Right ventricle myocardium inferior (tissue), 1 donor: ENCODE measurements at regions of chr1 and their contacts with region 1.

Region 1: DNA sequence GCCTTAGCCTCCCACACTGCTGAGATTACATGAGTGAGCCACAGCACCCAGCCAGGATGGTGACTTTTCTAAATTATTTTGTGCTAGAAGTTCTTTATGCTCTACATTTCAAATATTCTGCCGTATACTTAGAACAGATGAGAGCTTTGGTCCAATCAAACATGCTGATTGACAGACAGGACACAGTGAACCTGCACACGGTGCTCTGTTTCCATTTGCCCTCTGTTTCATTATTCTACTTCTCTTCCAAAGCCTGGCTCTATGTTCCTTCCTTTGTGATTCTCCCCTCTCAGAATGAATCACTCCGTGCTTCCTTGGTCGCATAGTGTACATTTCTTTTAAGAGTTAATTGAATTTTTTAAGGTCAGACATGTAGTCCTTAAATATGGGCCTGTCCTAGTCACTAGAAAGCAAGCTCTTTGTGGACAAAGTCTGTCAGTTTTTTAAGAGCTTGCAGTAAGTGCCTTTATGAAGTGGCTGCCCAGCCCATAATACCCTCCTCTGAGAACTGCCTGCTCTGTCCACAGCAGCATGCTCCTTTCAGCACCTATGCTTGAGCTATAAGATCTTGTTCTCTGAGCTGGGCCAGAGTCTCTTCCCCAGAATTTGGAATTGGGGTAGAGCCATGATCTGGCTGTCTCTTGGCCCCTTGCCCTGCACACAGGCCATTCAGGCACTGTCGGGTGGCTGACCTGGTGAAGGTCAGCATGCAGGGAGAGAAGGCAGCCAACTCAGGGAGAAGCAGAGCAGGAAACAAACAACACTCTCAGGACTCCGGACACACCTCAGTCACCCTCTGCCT is 66.8 kb upstream of the SLC44A3 start:
- DNase-seq: peak; percentile 77
- ATAC-seq: peak; percentile 91

Region 2: DNA sequence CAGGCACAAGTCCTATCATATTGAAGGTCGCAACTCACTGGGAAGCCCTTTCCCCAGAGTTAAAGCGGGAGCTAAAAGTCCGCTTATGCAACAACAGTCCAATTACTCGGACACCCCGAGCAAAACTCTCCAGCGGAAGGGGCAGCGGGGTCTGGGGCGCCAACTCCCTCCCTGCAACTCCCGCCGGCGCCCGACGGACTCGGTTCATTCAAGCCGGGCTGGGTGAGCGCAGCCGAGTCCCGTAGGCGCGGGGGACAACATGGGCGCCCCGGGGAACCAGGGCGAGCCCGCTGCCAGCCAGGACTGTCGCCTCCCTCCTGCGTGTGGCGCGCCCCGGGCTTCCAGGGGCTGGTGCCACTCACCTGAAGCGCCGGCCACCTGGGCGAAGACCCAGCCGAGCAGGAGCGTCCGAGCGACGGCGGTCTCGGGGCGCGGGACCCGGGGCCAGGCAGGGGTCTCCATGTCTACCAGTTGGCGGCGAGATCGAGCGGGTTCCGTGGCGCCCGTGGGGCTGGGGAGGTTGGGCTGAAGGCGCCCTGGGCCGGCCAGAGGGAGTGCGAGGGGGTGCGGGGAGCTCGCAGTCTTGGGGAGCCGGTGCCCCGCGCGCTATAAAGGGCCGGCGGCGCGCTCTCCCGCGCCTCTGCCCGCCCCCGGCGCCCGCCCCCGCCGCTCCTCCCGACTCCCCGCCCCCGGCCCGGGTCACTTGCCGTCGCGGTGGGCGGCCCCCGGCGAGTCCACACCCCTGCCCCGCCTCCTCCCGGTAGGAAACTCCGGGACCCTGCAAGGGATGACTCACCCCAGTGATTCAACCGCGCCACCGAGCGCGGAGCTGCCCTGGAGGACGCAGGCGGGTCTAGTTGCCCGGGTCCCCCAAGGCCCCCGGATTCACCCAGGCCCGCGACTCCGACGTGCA is 211.9 kb before region 1 on chr1 and contains the start of gene F3:
- intact Hi-C with region 1: loop called (anchors 2 kb)
- DNase-seq: peak; percentile 92
- ATAC-seq: peak; percentile 93
- total RNA-seq, gene F3: 27.9 TPM

Region 3: DNA sequence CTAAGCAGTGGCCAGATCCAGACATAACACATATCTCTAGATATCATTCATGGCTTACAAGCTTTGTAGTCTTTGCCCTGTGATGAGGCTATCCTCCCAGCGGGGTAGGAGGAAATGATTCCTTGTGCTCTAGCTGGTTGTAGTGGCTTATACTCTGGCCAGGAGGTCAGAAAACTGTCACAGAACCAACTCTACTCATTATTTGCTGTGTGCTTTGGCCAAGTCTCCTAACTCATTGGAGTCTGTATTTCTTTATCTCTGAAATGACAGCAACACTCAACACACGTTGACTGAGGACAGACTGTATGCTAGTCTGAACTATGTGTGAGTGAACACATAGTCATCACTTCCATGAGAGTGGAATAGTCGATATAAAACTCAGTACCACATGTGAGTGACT is 95.2 kb before region 1 on chr1:
- intact Hi-C with region 1: loop called (anchors 1 kb)
- DNase-seq: no peak
- ATAC-seq: peak; percentile 96

Region 4: DNA sequence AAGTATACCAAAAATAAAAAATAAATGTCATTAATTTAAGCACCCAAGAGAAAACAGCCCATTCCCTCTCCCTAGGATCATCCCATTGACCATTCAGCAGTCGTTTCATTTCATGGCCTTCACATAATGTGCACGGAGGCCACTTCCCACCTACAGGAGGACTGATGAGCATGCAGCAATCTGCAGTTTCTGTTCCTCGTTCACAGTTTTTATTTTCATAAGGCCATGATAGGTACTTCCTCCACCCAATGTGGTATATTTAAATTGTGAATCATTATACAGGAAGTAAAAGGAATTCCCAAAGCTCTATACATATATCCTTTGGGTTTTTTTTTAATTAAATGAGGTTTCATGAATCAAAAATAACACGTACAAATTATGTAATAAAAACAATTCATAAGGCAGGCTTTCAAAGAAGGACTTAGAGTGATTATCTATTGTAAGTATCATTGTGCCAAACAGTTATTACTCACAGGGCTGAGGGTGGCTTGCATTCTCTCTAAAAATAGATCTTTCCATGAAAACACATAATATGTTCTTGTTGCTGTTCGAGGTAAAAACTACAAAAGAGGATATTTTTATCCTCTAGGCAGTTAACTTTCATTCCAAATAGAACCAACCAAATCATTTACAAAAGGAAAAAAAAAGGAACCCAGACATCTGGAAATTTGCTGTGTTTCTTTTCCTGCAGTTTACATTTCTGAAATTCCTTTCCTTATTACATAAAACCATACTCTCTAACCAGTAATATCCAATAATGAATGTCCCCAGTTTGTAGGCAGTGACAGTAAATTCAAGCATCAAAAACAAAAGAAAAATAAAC is 39.3 kb after region 1 on chr1:
- intact Hi-C with region 1: loop called (anchors 2 kb)
- DNase-seq: no peak
- ATAC-seq: peak; percentile 69

Region 5: GRCh38 chr1:94983171-94983739 is 229.9 kb after region 1 on chr1:
- intact Hi-C with region 1: no loop called
- DNase-seq: no peak
- ATAC-seq: peak; percentile 51